ENCODE measurements at regions of chr19 and their contacts with region 1.

Region 1: GRCh38 chr19:7145494-7146485 is 76.3 kb downstream of the ZNF557 start:
- DNase-seq: no peak
- CTCF ChIP-seq: no peak

Region 2: DNA sequence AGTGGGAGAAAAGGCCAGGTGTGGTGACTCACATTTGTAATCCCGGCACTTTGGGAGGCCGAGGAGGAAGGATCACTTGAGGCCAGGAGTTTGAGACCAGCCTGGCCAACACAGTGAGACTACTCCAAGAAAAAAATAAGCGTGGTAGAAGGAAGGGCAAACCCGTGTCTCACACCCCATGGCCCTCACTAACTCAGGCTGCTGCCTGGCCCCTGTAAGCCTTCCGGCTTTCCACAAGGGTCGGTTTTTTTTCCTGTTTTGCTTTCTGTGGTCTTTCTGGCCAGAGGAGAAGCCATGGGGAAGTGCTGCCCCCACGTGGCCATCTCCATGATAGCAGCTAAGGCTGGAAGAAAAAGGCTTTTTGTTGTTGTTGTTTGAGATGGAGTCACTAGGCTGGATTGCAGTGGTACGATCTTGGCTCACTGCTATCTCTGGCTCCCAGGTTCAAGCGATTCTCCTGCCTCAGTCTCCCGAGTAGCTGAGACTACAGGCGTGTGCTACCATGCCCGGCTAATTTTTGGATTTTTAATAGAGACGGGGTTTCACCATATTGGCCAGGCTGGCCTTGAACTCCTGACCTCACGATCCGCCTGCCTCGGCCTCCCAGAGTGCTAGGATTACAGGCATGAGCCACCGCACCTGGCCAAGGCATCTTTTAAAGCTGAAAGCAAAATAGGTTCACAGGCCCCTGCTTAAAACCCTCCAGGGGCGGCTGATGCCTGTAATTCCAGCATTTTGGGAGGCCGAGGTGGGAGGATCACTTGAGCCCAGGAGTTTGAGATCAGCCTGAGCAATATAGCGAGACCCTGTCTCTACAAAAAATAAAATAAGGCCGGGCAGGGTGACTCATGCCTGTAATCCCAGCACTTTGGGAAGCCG is 195.4 kb after region 1 on chr19:
- in situ Hi-C with region 1: loop called (anchors 25 kb)
- DNase-seq: peak; percentile 54
- CTCF ChIP-seq: peak; percentile 84